ENCODE measurements at regions of chr2 and their contacts with region 1.

Region 1: GRCh38 chr2:100178051-100178788 is 35.8 kb upstream of the AFF3 start:
- DNase-seq: no peak
- ATAC-seq: no peak

Region 2: DNA sequence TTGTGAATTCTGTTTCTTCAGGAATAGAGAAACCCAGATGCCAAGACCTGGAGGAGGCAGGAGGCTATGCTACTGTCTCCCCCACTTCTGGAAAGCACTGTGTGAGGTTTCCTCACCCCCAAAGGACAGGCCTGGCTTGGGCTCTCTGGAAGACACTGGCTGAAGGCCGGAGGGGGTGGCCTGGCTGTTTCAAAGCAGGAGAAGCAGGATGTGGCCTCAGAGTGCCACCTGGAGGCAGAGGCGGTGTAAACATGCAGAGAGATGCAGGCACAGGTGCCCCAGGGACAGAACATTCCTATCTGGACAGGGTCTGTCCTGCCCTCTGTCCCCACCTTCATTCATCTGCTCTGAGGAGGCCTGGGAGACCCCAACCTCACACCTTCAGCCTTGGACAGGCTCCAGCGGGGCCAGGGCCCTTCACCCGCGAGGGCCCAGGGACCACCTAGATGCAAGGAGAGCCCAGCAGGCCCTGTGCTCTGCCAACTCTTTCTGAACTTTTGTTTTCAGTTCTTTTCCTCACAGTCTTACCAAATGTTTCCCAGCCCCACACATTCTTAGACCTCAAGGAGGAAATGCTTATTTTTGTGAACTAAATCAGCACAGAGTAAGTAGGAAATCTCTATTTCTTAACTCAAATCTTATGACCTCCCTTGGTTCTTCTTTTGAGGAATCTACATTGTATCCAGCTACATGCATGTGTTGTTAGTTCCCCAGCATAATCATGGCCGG is 64.8 kb after region 1 on chr2:
- intact Hi-C with region 1: loop called (anchors 10 kb)
- DNase-seq: peak; percentile 85
- ATAC-seq: peak; percentile 94

Region 3: GRCh38 chr2:100548771-100549170 is 370.6 kb after region 1 on chr2:
- intact Hi-C with region 1: no loop called
- DNase-seq: no peak
- ATAC-seq: no peak

Region 4: GRCh38 chr2:100653449-100654035 is 475.3 kb after region 1 on chr2:
- intact Hi-C with region 1: no loop called
- DNase-seq: no peak
- ATAC-seq: no peak

Region 5: GRCh38 chr2:101188683-101189405 is 1010.6 kb after region 1 on chr2:
- intact Hi-C with region 1: no loop called
- DNase-seq: no peak
- ATAC-seq: no peak